ENCODE measurements at regions of chr22 and their contacts with region 1.

Region 1: DNA sequence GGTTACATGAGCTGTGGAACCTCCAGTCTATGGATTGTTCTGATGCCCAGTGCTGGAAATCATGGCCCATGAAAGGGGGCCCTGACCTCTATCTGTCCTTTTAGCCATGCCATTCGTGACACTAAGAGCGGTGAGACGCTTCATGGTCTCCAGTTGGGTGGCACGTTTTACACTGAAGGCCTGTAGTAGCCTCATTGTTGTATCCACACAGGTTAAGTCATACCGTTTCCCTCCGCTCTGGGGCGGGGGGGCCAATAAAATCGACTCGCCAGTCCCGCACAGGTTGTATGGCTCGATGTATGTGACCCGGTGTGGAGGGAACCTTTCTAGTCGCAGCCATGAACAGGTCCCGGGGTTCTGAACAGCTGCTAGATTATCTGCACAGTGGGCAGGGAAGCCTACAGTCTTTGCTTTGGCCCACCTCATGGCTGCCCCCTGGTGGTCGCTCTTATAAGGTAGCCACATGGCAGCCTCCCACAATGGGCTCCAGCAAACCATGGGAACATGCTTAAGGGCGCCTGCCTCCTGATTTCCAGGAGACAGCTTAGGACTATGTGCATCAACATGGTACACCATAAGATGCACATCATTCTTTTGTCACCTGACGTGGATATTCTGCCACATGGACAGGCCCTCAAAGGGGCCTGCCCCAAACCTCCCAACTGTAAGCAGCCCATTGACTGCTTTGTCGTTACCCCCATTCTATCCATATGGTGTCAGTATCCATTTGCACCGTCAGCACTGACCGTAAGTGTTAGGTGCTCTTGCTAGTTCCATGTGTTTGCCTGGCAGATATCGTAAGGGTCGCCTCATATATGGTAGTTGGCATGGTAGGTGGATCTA is 19.7 kb upstream of the APOL3 start:
- DNase-seq: peak; percentile 86
- ATAC-seq: peak; percentile 98
- H3K4me3 ChIP-seq: no peak overlapping the region
- H3K4me3 Mint-ChIP-seq: no peak overlapping the region
- H3K27ac ChIP-seq: no peak overlapping the region
- H3K27ac Mint-ChIP-seq: no peak overlapping the region
- H3K4me1 ChIP-seq: peaks cover 0 to 5% of the 10 kb centered on the region in 2 donors
- H3K4me1 Mint-ChIP-seq: peaks cover 5% of the 10 kb centered on the region
- H3K27me3 ChIP-seq: no peaks in the 10 kb centered on the region
- H3K27me3 Mint-ChIP-seq: peaks cover 3% of the 10 kb centered on the region
- CTCF ChIP-seq: peak; percentile 91

Region 2: DNA sequence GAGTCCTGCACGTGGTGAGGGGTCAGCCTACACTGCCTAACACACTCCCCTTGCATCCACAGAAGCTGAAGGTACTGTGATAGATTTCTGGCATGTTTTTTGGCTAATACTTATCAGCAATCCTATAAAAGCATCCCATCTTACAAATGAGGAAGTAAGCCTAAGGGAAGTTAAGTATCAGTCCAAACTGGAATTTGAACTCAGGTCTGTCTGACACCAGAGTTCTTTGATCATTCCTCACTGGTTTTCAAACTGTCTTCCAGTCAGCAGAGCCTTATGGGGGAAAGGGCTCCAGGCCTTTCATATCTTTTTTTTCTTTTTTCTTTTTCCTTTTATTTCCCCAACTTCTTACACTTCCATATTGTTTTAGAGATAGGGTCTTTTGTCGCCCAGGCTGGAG is 257.2 kb before region 1 on chr22:
- CTCF ChIA-PET with region 1: no interaction called
- POLR2A ChIA-PET with region 1: no interaction called
- intact Hi-C with region 1: no loop called
- DNase-seq: no peak
- ATAC-seq: no peak
- H3K4me3 ChIP-seq: no peak overlapping the region
- H3K4me3 Mint-ChIP-seq: no peak overlapping the region
- H3K27ac ChIP-seq: no peak overlapping the region
- H3K27ac Mint-ChIP-seq: no peak overlapping the region
- H3K4me1 ChIP-seq: no peaks in the 10 kb centered on the region
- H3K4me1 Mint-ChIP-seq: no peaks in the 10 kb centered on the region
- H3K27me3 ChIP-seq: peaks cover 0 to under 1% (median 0%) of the 10 kb centered on the region in 4 experiments
- H3K27me3 Mint-ChIP-seq: peaks cover 16% of the 10 kb centered on the region
- CTCF ChIP-seq: no peak

Region 3: GRCh38 chr22:36117053-36117554 is 63.2 kb before region 1 on chr22:
- CTCF ChIA-PET with region 1: no interaction called
- POLR2A ChIA-PET with region 1: no interaction called
- intact Hi-C with region 1: no loop called
- DNase-seq: no peak
- ATAC-seq: no peak
- H3K4me3 ChIP-seq: no peak overlapping the region
- H3K4me3 Mint-ChIP-seq: no peak overlapping the region
- H3K27ac ChIP-seq: no peak overlapping the region
- H3K27ac Mint-ChIP-seq: no peak overlapping the region
- H3K4me1 ChIP-seq: no peaks in the 10 kb centered on the region
- H3K4me1 Mint-ChIP-seq: no peaks in the 10 kb centered on the region
- H3K27me3 ChIP-seq: no peaks in the 10 kb centered on the region
- H3K27me3 Mint-ChIP-seq: no peaks in the 10 kb centered on the region
- CTCF ChIP-seq: no peak

Region 4: DNA sequence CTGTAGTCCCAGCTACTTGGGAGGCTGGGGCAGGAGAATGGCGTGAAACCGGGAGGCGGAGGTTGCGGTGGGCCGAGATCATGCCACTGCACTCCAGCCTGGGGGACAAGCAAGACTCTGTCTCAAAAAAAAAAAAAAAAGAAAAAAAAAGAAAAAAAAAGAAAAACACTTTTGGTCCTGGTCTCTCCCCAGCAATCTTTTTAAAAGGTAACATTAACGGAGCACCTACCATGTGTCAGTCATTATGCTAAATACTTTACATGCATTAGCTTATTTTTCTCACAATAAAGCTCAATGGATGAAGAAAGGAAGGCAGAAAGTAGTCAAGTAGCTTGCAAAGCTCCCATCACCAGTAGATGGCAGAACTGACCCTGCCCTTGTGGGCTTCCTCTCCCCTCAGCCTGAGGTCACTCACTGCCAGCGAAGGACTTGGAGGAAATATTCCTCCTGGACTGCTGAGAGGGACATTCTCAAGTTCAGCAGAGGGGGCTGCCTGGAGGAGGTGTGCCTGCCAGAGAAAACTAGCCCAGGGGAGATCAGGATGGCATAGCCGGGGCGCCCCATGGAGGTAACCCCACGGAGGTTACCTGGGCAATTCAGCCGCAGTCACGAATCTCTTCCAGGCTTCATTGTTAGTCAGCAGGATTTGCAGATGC is 35.2 kb before region 1 on chr22:
- CTCF ChIA-PET with region 1: interaction called, 174 read pairs
- POLR2A ChIA-PET with region 1: interaction called, 3 read pairs
- intact Hi-C with region 1: no loop called
- DNase-seq: peak; percentile 55
- ATAC-seq: peak; percentile 74
- H3K4me3 ChIP-seq: no peak overlapping the region
- H3K4me3 Mint-ChIP-seq: no peak overlapping the region
- H3K27ac ChIP-seq: no peak overlapping the region
- H3K27ac Mint-ChIP-seq: no peak overlapping the region
- H3K4me1 ChIP-seq: no peaks in the 10 kb centered on the region
- H3K4me1 Mint-ChIP-seq: peaks cover 1% of the 10 kb centered on the region
- H3K27me3 ChIP-seq: no peaks in the 10 kb centered on the region
- H3K27me3 Mint-ChIP-seq: no peaks in the 10 kb centered on the region
- CTCF ChIP-seq: peak; percentile 69

Region 5: DNA sequence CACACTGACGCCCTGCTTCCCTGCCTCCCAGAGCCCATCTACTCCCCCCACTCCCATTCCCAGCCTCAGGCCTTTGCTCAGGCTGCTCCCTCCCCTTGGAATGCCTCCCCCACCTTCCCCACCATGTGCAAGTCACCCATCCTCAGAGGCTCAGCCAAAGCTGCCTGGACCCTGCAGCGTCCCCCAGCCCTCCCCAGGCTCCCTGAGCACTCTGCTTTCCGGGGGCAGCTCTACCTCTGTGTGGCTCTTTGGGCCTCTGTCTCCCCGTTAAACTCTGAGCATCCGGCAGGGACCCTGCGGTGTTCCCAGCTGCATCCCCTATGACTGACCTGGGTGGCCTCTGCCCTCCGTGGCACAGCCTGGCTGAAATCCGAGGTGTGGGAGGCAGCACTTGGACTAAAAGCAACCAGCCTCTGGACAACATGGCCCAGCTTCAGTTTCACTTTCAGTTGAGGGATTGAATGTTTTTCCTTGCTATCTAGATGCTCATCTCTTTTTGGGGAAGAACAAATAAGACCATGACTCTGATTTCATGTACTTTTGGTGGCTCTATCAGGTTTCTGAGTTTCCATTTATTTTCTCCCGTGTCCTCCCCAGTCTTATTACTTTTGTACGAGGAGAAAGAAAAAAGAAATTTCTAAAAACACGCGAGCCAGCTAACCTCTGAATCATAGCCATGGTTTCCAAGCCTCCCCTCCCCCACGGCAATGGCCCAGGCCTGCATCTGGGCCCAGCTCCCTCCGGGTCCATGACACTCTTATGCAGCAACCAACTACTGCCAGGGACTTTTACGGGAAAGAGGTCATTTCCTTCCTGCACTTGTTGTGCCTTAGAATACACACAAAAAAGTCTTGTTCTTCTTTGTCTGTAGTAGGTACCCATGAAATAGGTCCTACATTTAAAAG is 23.5 kb before region 1 on chr22:
- CTCF ChIA-PET with region 1: interaction called, 182 read pairs
- POLR2A ChIA-PET with region 1: interaction called, 5 read pairs
- intact Hi-C with region 1: loop called (anchors 2 kb)
- DNase-seq: peak; percentile 69
- ATAC-seq: peak; percentile 59
- H3K4me3 ChIP-seq: peak overlapping the region; percentile 42 to 60 (median 55)
- H3K4me3 Mint-ChIP-seq: peak overlapping the region; percentile 94
- H3K27ac ChIP-seq: peak overlapping the region; percentile 72 to 92
- H3K27ac Mint-ChIP-seq: peak overlapping the region; percentile 93
- H3K4me1 ChIP-seq: peaks cover 53 to 69% of the 10 kb centered on the region in 2 donors
- H3K4me1 Mint-ChIP-seq: peaks cover 78% of the 10 kb centered on the region
- H3K27me3 ChIP-seq: no peaks in the 10 kb centered on the region
- H3K27me3 Mint-ChIP-seq: no peaks in the 10 kb centered on the region
- CTCF ChIP-seq: no peak

Measured in B cell (primary cell).